ENCODE measurements at regions of chr6 and their contacts with region 1.

Region 1: GRCh38 chr6:138943089-138943625 is 44.9 kb downstream of the REPS1 start:
- DNase-seq: no peak
- H3K4me3 ChIP-seq: no peak overlapping the region
- H3K27ac ChIP-seq: no peak overlapping the region
- H3K4me1 ChIP-seq: peaks cover 13% of the 10 kb centered on the region
- H3K27me3 ChIP-seq: no peaks in the 10 kb centered on the region
- CTCF ChIP-seq: no peak

Region 2: DNA sequence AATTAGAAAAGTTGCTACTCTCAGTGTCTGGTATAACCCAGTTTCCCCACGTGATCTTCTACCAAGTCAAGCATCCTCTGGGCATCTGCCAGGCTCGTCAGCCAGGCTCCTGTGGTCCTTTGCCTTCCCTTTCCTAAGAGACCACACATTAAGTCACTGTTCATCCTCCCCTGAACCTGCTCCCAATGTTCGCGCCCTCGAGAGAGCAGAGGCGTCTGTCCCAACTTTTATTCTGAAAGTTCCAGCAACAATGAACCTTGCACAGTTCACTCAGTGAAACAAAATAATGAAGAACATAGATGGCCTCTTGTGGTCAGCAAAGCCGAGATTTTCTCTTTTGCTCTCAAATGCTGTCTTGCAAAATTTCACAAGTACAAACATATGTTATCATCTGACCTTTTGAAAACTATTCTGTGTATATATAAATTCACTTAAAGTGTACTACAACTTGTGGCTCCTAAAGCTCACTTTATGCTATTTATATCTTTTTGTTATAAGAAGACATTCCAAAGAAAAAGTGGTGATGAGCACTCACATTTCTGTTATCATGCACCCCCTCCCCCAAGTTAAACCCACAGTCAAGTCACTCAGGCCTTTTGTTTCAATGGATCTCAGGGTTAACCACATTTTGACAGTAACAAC is 404.6 kb before region 1 on chr6:
- CTCF ChIA-PET with region 1: no interaction called
- POLR2A ChIA-PET with region 1: no interaction called
- intact Hi-C with region 1: no loop called
- DNase-seq: no peak
- H3K4me3 ChIP-seq: no peak overlapping the region
- H3K27ac ChIP-seq: no peak overlapping the region
- H3K4me1 ChIP-seq: peaks cover 43% of the 10 kb centered on the region
- H3K27me3 ChIP-seq: no peaks in the 10 kb centered on the region
- CTCF ChIP-seq: no peak

Region 3: GRCh38 chr6:138864343-138864890 is 78.7 kb before region 1 on chr6:
- CTCF ChIA-PET with region 1: interaction called, 10 read pairs
- POLR2A ChIA-PET with region 1: no interaction called
- intact Hi-C with region 1: no loop called
- DNase-seq: no peak
- H3K4me3 ChIP-seq: no peak overlapping the region
- H3K27ac ChIP-seq: no peak overlapping the region
- H3K4me1 ChIP-seq: no peaks in the 10 kb centered on the region
- H3K27me3 ChIP-seq: no peaks in the 10 kb centered on the region
- CTCF ChIP-seq: no peak

Region 4: GRCh38 chr6:139080255-139080920 is 137.2 kb after region 1 on chr6:
- CTCF ChIA-PET with region 1: no interaction called
- POLR2A ChIA-PET with region 1: no interaction called
- intact Hi-C with region 1: no loop called
- DNase-seq: no peak
- H3K4me3 ChIP-seq: no peak overlapping the region
- H3K27ac ChIP-seq: no peak overlapping the region
- H3K4me1 ChIP-seq: no peaks in the 10 kb centered on the region
- H3K27me3 ChIP-seq: no peaks in the 10 kb centered on the region
- CTCF ChIP-seq: no peak

Measured in A673 (cell line).